CD4-positive, alpha-beta T cell (primary cell): ENCODE measurements at regions of chr16 and their contacts with region 1.

Region 1: DNA sequence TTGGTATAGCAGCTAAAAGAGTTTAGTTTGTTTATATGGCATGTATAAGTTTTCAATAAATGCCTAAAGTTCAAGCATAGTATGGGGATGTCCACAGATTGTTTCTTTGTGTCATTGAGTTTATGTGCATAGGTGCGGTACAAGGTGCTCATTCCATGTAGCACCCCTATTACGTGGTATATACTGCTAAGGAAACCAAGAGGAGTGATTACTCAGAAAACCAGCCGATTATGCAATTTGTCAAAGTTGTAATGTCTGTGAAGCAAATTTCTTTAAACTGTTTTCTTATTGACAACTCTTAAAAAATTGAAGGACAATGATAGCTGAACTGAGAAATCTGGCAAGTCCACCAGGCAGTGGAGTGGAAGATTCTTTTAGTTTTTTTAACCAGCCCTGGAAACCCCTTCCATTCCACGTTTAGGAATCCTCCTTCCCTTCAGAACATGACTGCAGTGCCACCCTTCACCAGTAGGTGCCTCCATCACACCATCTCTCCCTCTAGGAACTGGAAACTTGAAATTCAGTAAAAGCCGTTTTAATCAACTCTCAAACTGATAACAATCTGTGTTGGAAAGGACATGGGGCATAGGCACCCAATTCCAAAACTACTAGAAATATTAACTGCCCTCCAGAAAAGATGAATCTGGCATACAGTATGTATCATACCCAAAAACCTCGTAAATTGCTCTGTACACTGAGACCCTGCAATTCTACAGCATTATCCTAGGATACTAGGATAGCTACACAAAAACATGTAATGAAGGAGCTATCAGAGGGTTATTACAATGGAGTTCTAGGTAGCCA is 43.5 kb downstream of the REXO5 start:
- DNase-seq: peak; percentile 35 to 78 (median 59)
- ATAC-seq: peak; percentile 57
- H3K4me3 ChIP-seq: no peak overlapping the region
- H3K4me3 Mint-ChIP-seq: no peak overlapping the region
- H3K27ac ChIP-seq: no peak overlapping the region
- H3K27ac Mint-ChIP-seq: no peak overlapping the region
- H3K4me1 ChIP-seq: peaks cover 8% of the 10 kb centered on the region
- H3K4me1 Mint-ChIP-seq: peaks cover 13% of the 10 kb centered on the region
- H3K27me3 ChIP-seq: no peaks in the 10 kb centered on the region
- H3K27me3 Mint-ChIP-seq: no peaks in the 10 kb centered on the region
- CTCF ChIP-seq: peak; percentile 99

Region 2: GRCh38 chr16:20944861-20945574 is 95.2 kb after region 1 on chr16:
- CTCF ChIA-PET with region 1: no interaction called
- POLR2A ChIA-PET with region 1: no interaction called
- intact Hi-C with region 1: loop called (anchors 1 to 2 kb)
- DNase-seq: peak in 5 of 14 experiments; percentile 2 to 50 (median 23)
- ATAC-seq: peak; percentile 44
- H3K4me3 ChIP-seq: no peak overlapping the region
- H3K4me3 Mint-ChIP-seq: no peak overlapping the region
- H3K27ac ChIP-seq: no peak overlapping the region
- H3K27ac Mint-ChIP-seq: no peak overlapping the region
- H3K4me1 ChIP-seq: peaks cover 9% of the 10 kb centered on the region
- H3K4me1 Mint-ChIP-seq: peaks cover 5% of the 10 kb centered on the region
- H3K27me3 ChIP-seq: no peaks in the 10 kb centered on the region
- H3K27me3 Mint-ChIP-seq: no peaks in the 10 kb centered on the region
- CTCF ChIP-seq: no peak

Region 3: DNA sequence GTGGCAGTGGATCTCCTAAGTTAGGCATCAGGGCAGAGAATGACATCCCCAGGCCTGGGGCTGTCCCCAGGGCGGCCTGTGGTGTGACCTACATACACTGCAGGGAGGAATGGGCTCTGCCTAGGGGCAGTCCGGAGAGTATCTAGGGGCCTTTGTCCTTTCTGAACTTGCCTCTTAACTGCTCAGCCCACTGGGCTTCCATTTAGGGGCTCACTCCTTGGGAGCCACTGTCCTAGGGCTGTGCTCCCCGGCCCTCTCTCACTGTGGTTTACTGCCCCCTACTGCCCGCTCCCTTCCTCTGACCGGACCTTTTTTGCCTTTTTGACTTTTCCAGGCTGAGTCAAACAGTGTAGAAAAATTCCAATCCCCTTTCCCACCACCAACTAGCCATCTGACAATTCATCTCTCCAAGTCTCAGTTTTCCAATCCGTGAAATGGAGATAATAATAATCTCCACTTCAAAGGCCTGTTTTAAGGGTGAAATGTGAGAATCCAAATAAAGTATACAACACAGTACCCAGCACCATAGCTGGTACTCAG is 234.0 kb after region 1 on chr16:
- CTCF ChIA-PET with region 1: interaction called, 3 read pairs
- POLR2A ChIA-PET with region 1: no interaction called
- intact Hi-C with region 1: loop called (anchors 1 kb)
- DNase-seq: peak; percentile 13 to 62 (median 34)
- ATAC-seq: peak; percentile 43
- H3K4me3 ChIP-seq: no peak overlapping the region
- H3K4me3 Mint-ChIP-seq: no peak overlapping the region
- H3K27ac ChIP-seq: no peak overlapping the region
- H3K27ac Mint-ChIP-seq: no peak overlapping the region
- H3K4me1 ChIP-seq: no peaks in the 10 kb centered on the region
- H3K4me1 Mint-ChIP-seq: no peaks in the 10 kb centered on the region
- H3K27me3 ChIP-seq: peaks cover under 1 to 10% of the 10 kb centered on the region in 2 experiments
- H3K27me3 Mint-ChIP-seq: peaks cover 18% of the 10 kb centered on the region
- CTCF ChIP-seq: peak; percentile 55

Region 4: DNA sequence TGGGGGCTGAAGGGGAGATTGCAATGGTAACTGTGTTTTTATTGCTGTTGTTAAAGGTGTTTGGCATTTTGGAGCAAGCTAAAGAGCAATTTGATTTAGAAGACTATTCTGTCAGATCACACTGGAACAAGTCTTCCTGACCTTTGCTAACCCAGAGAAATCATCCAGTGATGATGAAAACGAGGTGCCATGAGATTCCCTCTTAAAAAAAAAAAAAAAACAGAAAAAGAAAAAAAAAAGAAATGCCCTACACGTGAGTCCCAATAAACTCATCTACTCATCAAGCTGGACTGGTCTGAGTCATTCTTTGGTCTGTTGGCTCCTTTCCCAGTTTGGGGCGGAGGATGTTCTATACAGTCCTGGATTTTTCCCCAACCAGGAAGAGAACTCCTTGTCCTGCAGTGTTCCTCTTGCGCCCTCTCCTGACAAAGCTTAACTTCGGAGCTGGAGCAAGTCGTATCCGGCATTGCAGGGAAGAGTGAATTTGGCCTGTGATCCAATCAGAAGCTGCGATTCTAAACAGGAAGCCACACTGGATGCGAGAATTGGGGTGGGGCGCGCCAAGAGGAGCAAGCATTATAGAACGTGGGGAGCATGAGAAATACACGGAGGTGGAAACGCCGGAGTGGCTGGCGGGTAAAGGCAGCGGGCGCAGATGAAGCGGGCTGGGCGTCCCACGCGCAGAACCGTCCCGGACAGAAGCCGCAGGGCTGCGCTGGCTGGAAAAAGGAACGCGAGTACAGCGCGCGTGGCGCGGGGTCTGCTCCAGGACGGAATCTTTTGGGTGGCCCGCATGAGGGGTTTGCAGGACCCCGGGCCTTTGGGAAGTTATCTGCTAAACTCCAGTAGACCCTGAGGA is 450.7 kb after region 1 on chr16:
- CTCF ChIA-PET with region 1: no interaction called
- POLR2A ChIA-PET with region 1: no interaction called
- intact Hi-C with region 1: loop called in 1 of 2 experiments (anchors 5 kb)
- DNase-seq: peak in 9 of 14 experiments; percentile 7 to 78 (median 15)
- ATAC-seq: peak; percentile 67
- H3K4me3 ChIP-seq: peak overlapping the region; percentile 62
- H3K4me3 Mint-ChIP-seq: peak overlapping the region; percentile 94
- H3K27ac ChIP-seq: no peak overlapping the region
- H3K27ac Mint-ChIP-seq: no peak overlapping the region
- H3K4me1 ChIP-seq: peaks cover 21% of the 10 kb centered on the region
- H3K4me1 Mint-ChIP-seq: peaks cover 30% of the 10 kb centered on the region
- H3K27me3 ChIP-seq: peaks cover 0 to 3% of the 10 kb centered on the region in 2 experiments
- H3K27me3 Mint-ChIP-seq: peaks cover 36% of the 10 kb centered on the region
- CTCF ChIP-seq: no peak